ENCODE measurements at regions of chr20 and their contacts with region 1.

Region 1: GRCh38 chr20:59222253-59223181 is 58.9 kb downstream of the ZNF831 start:
- DNase-seq: peak; percentile 83
- ATAC-seq: peak; percentile 93 to 97

Region 2: GRCh38 chr20:58870239-58871014 is 352.1 kb before region 1 on chr20:
- intact Hi-C with region 1: loop called (anchors 2 to 5 kb)
- DNase-seq: peak; percentile 76
- ATAC-seq: peak; percentile 85

Region 3: GRCh38 chr20:59055295-59055694 is 167.2 kb before region 1 on chr20:
- intact Hi-C with region 1: loop called in 1 of 2 experiments (anchors 10 kb)
- DNase-seq: no peak
- ATAC-seq: peak in 1 of 2 donors; percentile 44

Region 4: DNA sequence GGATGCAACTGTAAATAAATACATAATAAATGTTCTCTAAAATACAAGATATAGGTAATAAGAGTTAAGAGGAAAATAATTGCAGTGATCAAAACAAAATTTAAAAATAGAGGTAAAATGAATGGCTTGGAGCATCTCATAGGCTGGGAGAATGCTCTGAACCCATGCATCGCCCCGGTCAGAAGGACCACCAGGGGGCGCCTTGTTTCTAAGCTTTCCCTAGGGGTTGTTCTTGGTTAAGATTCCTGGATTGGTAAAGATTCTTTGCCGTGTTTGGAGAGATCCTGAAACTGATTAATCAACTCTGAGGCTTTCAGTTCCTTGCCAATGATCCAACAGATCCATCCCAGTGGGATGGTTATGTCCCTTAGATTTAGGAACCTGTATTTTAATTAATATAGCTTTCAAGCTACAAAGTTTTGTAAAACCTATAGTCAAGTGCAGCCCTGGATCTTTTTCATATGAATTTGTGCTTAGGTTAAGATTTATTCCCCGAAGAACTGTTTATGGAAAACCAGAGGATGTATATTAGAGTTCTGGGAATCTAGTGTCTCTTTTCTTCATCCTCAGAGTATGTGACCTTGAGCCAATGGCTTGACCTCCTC is 134.6 kb before region 1 on chr20:
- intact Hi-C with region 1: loop called (anchors 2 to 10 kb)
- DNase-seq: peak; percentile 84
- ATAC-seq: peak; percentile 51 to 62

Region 5: DNA sequence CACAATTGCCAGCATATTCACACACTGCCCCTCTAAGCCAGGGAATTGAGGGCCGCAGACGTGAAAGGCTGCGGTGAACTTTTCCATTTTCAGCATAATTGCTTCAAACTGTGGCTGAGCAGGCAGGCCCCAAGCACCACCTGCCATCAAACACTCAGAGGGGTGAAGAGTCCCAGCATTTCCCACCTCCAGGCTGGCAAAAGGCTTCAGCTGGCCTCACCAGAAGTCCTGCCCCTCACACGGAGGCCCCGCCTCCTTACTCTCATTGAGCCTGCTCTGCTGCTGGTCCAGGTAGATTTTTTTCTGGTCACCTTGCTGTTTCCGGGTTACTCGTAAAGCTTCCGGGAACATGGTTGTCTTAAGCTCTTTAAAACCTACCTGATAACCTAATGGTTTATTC is 127.9 kb before region 1 on chr20:
- intact Hi-C with region 1: loop called (anchors 2 to 10 kb)
- DNase-seq: no peak
- ATAC-seq: no peak